ENCODE measurements at regions of chr2 and their contacts with region 1.

Region 1: GRCh38 chr2:98835831-98836385 is 100.1 kb downstream of the CRACDL start:
- ATAC-seq: peak in 5 of 8 experiments; percentile 94 to 99 (median 97)
- H3K4me3 ChIP-seq: peak overlapping the region in 1 of 5 donors; percentile 7
- H3K27ac ChIP-seq: peak overlapping the region; percentile 53 to 71
- H3K4me1 ChIP-seq: peaks cover 12 to 15% of the 10 kb centered on the region in 2 donors

Region 2: DNA sequence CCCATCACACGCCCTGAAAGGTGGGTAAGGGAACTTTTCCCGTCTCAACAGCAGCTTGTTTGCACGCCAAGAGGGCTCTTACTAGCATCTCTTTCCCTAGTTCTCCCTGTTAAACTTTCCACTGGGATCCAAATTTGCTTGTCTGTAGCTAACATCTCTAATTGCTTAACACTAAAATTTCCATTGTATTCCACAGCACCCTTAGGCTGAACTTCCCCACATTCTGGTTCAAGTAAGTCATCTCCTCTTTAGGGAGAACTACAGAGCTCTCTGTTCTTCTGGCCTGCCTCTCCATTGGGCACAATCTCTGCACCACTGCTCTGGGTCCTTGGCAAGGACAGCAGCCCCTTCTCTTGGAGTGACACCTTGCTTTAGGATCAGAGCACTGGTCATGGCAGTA is 203.6 kb before region 1 on chr2:
- in situ Hi-C with region 1: no loop called
- ATAC-seq: no peak
- H3K4me3 ChIP-seq: no peak overlapping the region
- H3K27ac ChIP-seq: no peak overlapping the region
- H3K4me1 ChIP-seq: no peaks in the 10 kb centered on the region

Region 3: GRCh38 chr2:98649135-98649991 is 186.5 kb before region 1 on chr2:
- in situ Hi-C with region 1: loop called (anchors 5 to 25 kb)
- ATAC-seq: peak; percentile 80 to 98 (median 92)
- H3K4me3 ChIP-seq: no peak overlapping the region
- H3K27ac ChIP-seq: no peak overlapping the region
- H3K4me1 ChIP-seq: peaks cover 0 to 3% of the 10 kb centered on the region in 2 donors

Region 4: GRCh38 chr2:98654699-98655495 is 181.0 kb before region 1 on chr2:
- in situ Hi-C with region 1: loop called in 7 of 9 experiments (anchors 5 to 25 kb)
- ATAC-seq: no peak
- H3K4me3 ChIP-seq: no peak overlapping the region
- H3K27ac ChIP-seq: no peak overlapping the region
- H3K4me1 ChIP-seq: no peaks in the 10 kb centered on the region

Region 5: DNA sequence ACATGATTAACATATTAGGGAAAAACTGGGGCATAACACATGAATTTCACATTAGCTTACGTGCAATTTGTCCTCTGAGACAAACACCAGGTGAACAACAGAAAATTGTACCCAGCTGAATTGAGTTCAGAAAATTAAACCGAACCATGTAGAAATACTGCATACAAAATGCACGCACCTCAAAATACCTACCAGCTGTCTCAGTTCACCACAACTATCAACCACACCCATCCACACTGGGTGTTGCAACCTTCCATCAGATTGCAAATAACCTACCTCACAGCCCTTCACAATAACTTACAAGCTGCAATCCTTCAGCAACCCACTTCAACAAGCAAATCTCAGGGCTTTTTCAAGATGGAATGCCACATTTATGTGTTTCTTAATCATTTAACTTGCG is 171.6 kb before region 1 on chr2:
- in situ Hi-C with region 1: loop called in 6 of 9 experiments (anchors 25 kb)
- ATAC-seq: peak in 3 of 8 experiments; percentile 63 to 98 (median 73)
- H3K4me3 ChIP-seq: no peak overlapping the region
- H3K27ac ChIP-seq: no peak overlapping the region
- H3K4me1 ChIP-seq: no peaks in the 10 kb centered on the region

Region 6: DNA sequence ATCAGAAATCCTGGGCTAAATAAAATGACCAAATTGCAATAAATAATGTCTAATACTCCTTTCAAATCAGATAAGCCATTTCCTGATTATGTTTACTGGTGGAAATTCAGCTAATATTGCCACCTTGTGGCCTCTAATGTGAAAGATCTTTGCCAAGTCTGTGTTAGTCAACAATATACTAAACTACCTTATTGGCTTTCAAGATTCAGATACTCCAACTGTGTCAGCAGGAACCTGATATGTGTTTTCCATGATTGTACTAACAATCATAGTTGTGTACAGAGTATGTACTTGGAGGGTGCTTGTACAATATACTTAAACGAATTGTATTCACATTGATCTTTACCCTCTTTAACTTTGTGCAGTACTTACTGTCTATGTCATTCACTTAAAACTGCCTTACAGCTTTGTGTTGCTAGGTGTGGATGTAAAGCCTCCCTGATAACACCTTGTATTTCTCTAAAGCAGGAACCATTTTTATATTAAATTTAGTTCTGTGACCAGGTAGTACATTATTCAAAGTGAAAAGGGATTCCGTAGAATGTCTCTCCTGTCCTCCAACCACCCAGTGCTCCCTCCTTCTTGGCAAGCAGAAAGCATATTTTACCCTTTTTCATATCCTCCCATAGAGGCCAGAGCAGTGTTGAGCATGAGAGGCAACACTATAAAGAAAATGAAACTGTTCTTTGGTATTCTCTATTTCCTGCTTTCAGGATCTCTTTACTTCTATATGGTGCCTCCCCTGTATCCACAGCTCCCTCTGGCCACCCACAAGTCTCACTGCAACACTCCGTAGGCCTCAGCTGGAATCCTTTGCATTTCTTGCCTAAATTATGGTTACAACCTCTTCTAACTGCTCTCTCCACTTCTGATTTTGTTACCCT is 230.4 kb after region 1 on chr2:
- in situ Hi-C with region 1: loop called in 1 of 9 experiments (anchors 25 kb)
- ATAC-seq: peak in 6 of 8 experiments; percentile 26 to 94 (median 85)
- H3K4me3 ChIP-seq: no peak overlapping the region
- H3K27ac ChIP-seq: no peak overlapping the region
- H3K4me1 ChIP-seq: no peaks in the 10 kb centered on the region